Activated naive CD4-positive, alpha-beta T cell treated with anti-CD3 and anti-CD28 coated beads for 36 hours (primary cell): ENCODE measurements at regions of chr4 and their contacts with region 1.

Region 1: DNA sequence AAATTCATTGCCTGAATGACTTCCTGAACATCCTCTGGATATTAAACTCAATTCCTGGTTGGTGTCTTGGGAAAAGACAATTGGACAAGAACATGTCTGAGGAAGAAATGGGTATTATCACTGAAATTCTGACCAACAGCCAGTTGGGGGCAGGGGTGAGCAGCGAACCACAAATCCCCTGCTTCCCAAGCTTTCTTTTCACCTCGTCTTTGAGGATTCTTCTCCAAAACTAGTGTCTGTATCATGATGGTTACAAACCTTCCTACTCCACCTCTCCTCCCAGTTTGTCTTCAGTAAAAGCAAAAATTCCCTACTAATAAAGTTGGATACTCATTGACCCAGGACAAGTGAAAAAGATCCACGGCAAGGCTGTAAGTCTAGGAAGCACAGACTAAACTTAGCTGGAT is 48.3 kb upstream of the WDR1 start:
- DNase-seq: peak; percentile 52
- H3K4me3 Mint-ChIP-seq: no peak overlapping the region
- H3K27ac Mint-ChIP-seq: no peak overlapping the region
- H3K4me1 Mint-ChIP-seq: peaks cover 25% of the 10 kb centered on the region
- H3K27me3 Mint-ChIP-seq: no peaks in the 10 kb centered on the region

Region 2: GRCh38 chr4:10245751-10246150 is 80.9 kb after region 1 on chr4:
- CTCF ChIA-PET with region 1: no interaction called
- intact Hi-C with region 1: loop called (anchors 5 kb)
- DNase-seq: no peak
- H3K4me3 Mint-ChIP-seq: no peak overlapping the region
- H3K27ac Mint-ChIP-seq: no peak overlapping the region
- H3K4me1 Mint-ChIP-seq: no peaks in the 10 kb centered on the region
- H3K27me3 Mint-ChIP-seq: no peaks in the 10 kb centered on the region

Region 3: DNA sequence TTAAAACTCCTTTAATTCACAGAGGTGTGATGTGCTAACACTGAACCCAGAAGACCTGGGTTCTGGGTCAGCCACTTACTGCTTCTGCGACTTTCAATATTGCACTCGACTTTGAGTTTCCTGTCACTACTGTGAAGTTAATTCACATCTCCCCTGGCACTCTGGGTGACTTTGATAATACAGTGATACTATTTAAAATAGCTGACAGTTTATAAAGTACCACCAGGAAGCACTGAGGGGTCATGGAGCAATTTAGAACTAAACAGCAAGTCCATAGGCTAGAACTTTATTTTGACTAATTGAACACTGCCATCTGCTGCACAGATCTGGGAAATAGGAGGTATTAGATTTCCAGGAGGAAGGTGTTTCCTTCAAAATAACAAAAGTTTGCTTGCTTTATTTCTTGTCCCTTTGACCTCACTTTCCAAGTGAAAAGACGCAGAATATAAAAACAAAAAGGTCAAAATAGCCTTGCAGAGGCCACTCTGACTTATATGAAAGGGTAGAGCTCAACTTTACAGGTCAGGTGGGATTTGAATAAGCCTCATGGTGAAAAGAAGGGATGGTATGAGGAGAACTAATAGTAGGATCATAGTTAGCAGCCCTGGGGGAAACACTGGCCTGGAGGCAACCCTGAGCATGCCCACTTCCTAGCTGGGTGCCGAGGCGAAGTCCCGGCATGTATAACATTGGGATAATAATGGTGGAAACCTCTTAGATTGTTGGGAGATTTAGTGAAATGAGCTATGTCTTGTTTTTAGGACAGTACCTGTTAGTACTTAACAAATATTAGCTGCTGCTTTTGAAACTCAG is 239.0 kb after region 1 on chr4:
- CTCF ChIA-PET with region 1: interaction called, 44 read pairs
- intact Hi-C with region 1: loop called (anchors 1 kb)
- DNase-seq: peak; percentile 38
- H3K4me3 Mint-ChIP-seq: no peak overlapping the region
- H3K27ac Mint-ChIP-seq: no peak overlapping the region
- H3K4me1 Mint-ChIP-seq: no peaks in the 10 kb centered on the region
- H3K27me3 Mint-ChIP-seq: no peaks in the 10 kb centered on the region

Region 4: DNA sequence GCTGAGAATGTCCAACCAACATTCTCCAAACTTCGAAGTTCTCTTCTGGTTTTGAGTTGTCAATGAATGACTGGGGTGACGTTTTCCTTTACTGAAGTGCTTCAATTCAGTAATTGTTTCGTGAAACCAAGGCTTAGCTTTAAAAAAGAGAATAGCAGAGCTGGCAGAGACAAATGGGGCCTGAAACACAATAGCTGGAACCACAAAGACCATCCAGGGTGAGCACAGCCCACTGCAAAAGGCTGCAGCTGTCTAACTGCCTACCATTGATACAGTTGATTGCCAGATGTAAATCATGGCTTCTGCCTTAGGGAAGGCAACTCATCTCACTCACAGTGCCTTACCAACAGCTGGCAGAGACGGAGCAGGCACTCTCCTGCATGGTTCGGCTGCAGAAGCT is 371.0 kb after region 1 on chr4:
- CTCF ChIA-PET with region 1: interaction called, 44 read pairs
- intact Hi-C with region 1: loop called (anchors 1 kb)
- DNase-seq: no peak
- H3K4me3 Mint-ChIP-seq: no peak overlapping the region
- H3K27ac Mint-ChIP-seq: no peak overlapping the region
- H3K4me1 Mint-ChIP-seq: no peaks in the 10 kb centered on the region
- H3K27me3 Mint-ChIP-seq: no peaks in the 10 kb centered on the region